OCI-LY7 (cell line): ENCODE measurements at regions of chr19 and their contacts with region 1.

Region 1: DNA sequence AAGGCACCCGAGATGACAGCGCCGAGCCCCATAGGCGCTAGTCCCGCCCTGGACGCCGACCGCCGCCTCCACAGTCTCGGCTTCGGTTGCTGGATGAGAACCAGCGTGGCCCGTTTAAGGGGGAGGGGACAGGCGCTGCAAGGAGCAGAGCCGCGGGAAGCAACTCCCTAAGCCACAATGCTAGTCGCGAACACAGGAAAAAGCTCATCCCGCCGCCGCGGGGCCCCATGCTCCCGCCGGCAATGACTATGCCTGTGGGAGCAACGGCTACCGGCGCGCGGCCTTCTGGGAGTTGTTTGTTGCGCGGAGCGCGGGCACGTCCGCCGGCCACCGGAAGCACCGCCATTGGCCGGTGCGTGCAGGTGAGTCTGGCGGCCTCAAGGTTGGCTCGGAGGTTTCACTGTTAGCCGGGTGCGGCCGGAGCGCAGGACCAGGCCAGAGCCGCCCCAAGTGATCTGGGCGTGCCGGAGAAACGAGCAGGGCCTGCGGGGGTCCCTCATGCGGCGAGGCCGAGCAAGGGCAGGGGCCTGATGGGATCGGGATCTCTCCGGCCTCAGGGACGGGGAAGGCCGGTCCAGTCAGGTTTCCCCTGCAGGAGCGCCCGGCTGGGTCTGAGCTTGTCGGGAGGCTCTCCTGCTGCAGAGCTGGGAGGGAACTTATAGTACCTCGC is at the start of gene ZNF544:
- DNase-seq: peak; percentile 64
- H3K4me3 ChIP-seq: peak within 1 kb of the TSS; percentile 72
- H3K27ac ChIP-seq: peak within 1 kb of the TSS; percentile 42
- H3K4me1 ChIP-seq: no peaks in the 10 kb centered on the region
- CTCF ChIP-seq: no peak
- total RNA-seq, gene ZNF544: 34.1 and 38.6 TPM in 2 replicates

Region 2: GRCh38 chr19:58182989-58183816 is 45.5 kb before region 1 on chr19 and contains the start of gene ZNF274:
- CTCF ChIA-PET with region 1: no interaction called
- POLR2A ChIA-PET with region 1: no interaction called
- intact Hi-C with region 1: no loop called
- DNase-seq: peak; percentile 96
- H3K4me3 ChIP-seq: peak within 1 kb of the TSS; percentile 85
- H3K27ac ChIP-seq: peak within 1 kb of the TSS; percentile 86
- H3K4me1 ChIP-seq: peaks cover 12% of the 10 kb centered on the region
- CTCF ChIP-seq: no peak
- total RNA-seq, gene ZNF274: 36.4 and 68.3 TPM in 2 replicates

Region 3: GRCh38 chr19:58212336-58213074 is 16.2 kb before region 1 on chr19:
- CTCF ChIA-PET with region 1: no interaction called
- POLR2A ChIA-PET with region 1: no interaction called
- intact Hi-C with region 1: no loop called
- DNase-seq: no peak
- H3K4me3 ChIP-seq: no peak overlapping the region
- H3K27ac ChIP-seq: no peak overlapping the region
- H3K4me1 ChIP-seq: no peaks in the 10 kb centered on the region
- CTCF ChIP-seq: no peak

Region 4: GRCh38 chr19:58305065-58305931 is 76.6 kb after region 1 on chr19 and contains the start of gene ERVK3-1:
- CTCF ChIA-PET with region 1: no interaction called
- POLR2A ChIA-PET with region 1: no interaction called
- intact Hi-C with region 1: loop called (anchors 2 kb)
- DNase-seq: peak; percentile 98
- H3K4me3 ChIP-seq: peak within 1 kb of the TSS; percentile 94
- H3K27ac ChIP-seq: peak within 1 kb of the TSS; percentile 46
- H3K4me1 ChIP-seq: peaks cover 15% of the 10 kb centered on the region
- CTCF ChIP-seq: no peak
- total RNA-seq, gene ERVK3-1: 61.7 and 79.6 TPM in 2 replicates